Activated CD8-positive, alpha-beta T cell treated with anti-CD3 and anti-CD28 coated beads, Interleukin-2, amount 10 ng/mL, durations not matched to agents 7 days and 5 days (primary cell): ENCODE measurements at regions of chr12 and their contacts with region 1.

Region 1: GRCh38 chr12:95942524-95943329 is at the start of gene CCDC38:
- DNase-seq: peak; percentile 90
- ATAC-seq: peak; percentile 97
- H3K4me3 Mint-ChIP-seq: peak within 1 kb of the TSS; percentile 84
- H3K27ac Mint-ChIP-seq: peak within 1 kb of the TSS; percentile 84
- H3K4me1 Mint-ChIP-seq: peaks cover 10% of the 10 kb centered on the region
- H3K27me3 Mint-ChIP-seq: peaks cover 13% of the 10 kb centered on the region
- total RNA-seq, gene CCDC38: not detected

Region 2: GRCh38 chr12:95733141-95733825 is 209.4 kb before region 1 on chr12:
- CTCF ChIA-PET with region 1: no interaction called
- POLR2A ChIA-PET with region 1: no interaction called
- DNase-seq: no peak
- ATAC-seq: no peak
- H3K4me3 Mint-ChIP-seq: no peak overlapping the region
- H3K27ac Mint-ChIP-seq: no peak overlapping the region
- H3K4me1 Mint-ChIP-seq: no peaks in the 10 kb centered on the region
- H3K27me3 Mint-ChIP-seq: peaks cover 8% of the 10 kb centered on the region

Region 3: DNA sequence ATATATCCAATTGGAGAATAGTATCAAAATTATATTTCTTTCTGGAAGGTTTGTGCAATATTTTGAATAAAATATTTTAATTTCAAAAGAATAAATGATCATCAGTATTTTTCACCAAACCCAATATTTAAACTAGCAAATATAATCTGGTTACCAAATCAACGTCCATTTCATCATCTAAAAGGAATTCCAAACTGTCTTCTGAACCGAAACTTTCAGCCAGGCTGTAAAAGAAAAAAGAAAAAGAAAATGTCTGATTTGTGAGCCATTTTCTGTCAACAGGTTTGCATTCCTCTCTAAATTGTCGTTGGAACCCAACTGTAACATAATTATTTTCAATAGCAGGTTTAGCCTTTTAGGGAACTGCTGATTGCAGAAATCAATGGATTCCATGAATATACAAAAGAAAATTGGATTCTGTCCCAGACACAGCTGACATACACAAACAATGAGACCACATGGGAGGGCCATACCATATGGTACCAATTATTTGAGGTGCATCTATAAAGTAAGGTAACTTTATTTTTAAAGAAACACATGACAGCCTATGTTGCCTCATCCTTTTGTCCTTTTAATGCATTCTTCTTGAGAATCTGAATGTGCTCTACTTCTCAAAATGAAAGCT is 61.3 kb before region 1 on chr12:
- CTCF ChIA-PET with region 1: no interaction called
- POLR2A ChIA-PET with region 1: no interaction called
- DNase-seq: no peak
- ATAC-seq: no peak
- H3K4me3 Mint-ChIP-seq: no peak overlapping the region
- H3K27ac Mint-ChIP-seq: no peak overlapping the region
- H3K4me1 Mint-ChIP-seq: no peaks in the 10 kb centered on the region
- H3K27me3 Mint-ChIP-seq: peaks cover 7% of the 10 kb centered on the region

Region 4: GRCh38 chr12:95918194-95918993 is 24.3 kb before region 1 on chr12:
- CTCF ChIA-PET with region 1: interaction called, 32 read pairs
- POLR2A ChIA-PET with region 1: no interaction called
- DNase-seq: peak; percentile 63
- ATAC-seq: peak; percentile 96
- H3K4me3 Mint-ChIP-seq: no peak overlapping the region
- H3K27ac Mint-ChIP-seq: no peak overlapping the region
- H3K4me1 Mint-ChIP-seq: no peaks in the 10 kb centered on the region
- H3K27me3 Mint-ChIP-seq: peaks cover 12% of the 10 kb centered on the region

Region 5: DNA sequence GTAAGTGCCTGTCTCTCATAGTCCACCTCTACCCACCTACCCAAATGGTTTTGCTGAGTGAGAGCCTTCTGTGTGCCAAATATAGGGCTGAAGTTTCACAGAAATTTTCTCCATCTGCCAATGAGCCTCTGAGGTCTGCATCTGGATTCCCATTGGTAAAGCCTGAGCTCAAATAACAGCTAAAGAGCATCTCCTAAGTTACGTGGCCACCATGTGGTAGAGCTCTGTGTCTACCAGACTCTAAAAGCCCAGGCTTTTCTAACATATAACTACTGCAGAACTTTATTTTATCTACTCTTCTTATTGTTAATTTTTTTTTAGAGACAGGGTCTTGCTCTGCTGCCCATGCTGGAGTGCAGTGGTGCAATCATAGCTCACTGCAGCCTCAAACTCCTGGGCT is 16.4 kb after region 1 on chr12:
- CTCF ChIA-PET with region 1: interaction called, 16 read pairs
- POLR2A ChIA-PET with region 1: interaction called, 10 read pairs
- DNase-seq: no peak
- ATAC-seq: peak; percentile 47
- H3K4me3 Mint-ChIP-seq: no peak overlapping the region
- H3K27ac Mint-ChIP-seq: no peak overlapping the region
- H3K4me1 Mint-ChIP-seq: no peaks in the 10 kb centered on the region
- H3K27me3 Mint-ChIP-seq: no peaks in the 10 kb centered on the region